Tibial artery (tissue), 4 donors: ENCODE measurements at regions of chr15 and their contacts with region 1.

Region 1: GRCh38 chr15:64905119-64905831 is 6.4 kb upstream of the ANKDD1A start:
- DNase-seq: peak; percentile 74 to 87
- H3K4me3 ChIP-seq: peak overlapping the region; percentile 43 to 46
- H3K27ac ChIP-seq: peak overlapping the region in 1 of 2 donors; percentile 58
- H3K4me1 ChIP-seq: peaks cover 0 to 9% (median 3%) of the 10 kb centered on the region in 4 donors
- H3K27me3 ChIP-seq: no peaks in the 10 kb centered on the region
- CTCF ChIP-seq: peak; percentile 83 to 88

Region 2: GRCh38 chr15:64693134-64693533 is 212.1 kb before region 1 on chr15:
- intact Hi-C with region 1: loop called (anchors 10 kb)
- DNase-seq: peak; percentile 66 to 83
- H3K4me3 ChIP-seq: no peak overlapping the region
- H3K27ac ChIP-seq: peak overlapping the region; percentile 57 to 84
- H3K4me1 ChIP-seq: peaks cover 0 to 84% (median 47%) of the 10 kb centered on the region in 4 donors
- H3K27me3 ChIP-seq: no peaks in the 10 kb centered on the region
- CTCF ChIP-seq: no peak

Region 3: GRCh38 chr15:64865998-64866520 is 39.2 kb before region 1 on chr15:
- intact Hi-C with region 1: no loop called
- DNase-seq: no peak
- H3K4me3 ChIP-seq: no peak overlapping the region
- H3K27ac ChIP-seq: peak overlapping the region in 1 of 2 donors; percentile 39
- H3K4me1 ChIP-seq: peaks cover 0 to 10% (median 0%) of the 10 kb centered on the region in 4 donors
- H3K27me3 ChIP-seq: no peaks in the 10 kb centered on the region
- CTCF ChIP-seq: no peak